Heart right ventricle (tissue), 16 donors: ENCODE measurements at regions of chr22 and their contacts with region 1.

Region 1: DNA sequence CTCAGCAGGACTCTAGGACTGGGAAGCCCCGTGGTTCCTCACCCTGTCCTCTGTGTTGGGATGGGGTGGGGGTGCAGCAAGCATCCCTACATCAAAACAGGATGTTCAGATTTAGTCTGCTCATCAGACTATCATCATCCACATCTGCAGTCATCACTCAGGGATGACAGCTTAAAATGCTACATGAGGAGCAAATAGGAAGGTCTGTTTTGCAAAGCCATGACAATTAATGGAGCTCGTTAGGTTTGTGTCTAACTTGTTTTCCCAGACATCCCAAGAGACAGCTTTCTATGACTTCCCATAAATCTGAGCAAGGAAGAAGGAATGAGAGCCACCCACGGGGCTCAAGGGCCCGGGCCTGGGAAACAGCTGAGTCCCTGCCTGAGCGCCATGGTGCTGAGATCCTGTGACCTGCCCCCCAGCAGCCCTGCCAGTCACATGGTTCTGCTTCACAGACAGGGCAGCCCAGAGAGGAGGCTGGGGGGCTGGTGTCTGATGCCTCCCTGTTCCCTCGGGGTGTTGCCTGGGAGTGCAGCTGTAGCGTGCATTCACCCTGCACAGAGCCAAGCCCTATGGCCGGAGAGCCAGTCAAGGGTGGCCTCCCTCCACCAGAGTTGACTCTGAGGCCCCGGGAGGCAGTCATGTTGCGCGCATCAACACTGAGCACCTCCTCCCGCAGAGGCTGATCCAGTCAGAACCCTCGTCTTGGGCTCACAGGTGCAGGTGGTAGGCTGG is 12.2 kb downstream of the DERL3 start:
- DNase-seq: no peak
- ATAC-seq: no peak
- H3K4me3 ChIP-seq: no peak overlapping the region
- H3K27ac ChIP-seq: peak overlapping the region in 9 of 10 donors; percentile 15 to 91 (median 70)
- H3K4me1 ChIP-seq: peaks cover 14 to 99% (median 73%) of the 10 kb centered on the region in 9 donors
- H3K27me3 ChIP-seq: no peaks in the 10 kb centered on the region
- CTCF ChIP-seq: no peak

Region 2: DNA sequence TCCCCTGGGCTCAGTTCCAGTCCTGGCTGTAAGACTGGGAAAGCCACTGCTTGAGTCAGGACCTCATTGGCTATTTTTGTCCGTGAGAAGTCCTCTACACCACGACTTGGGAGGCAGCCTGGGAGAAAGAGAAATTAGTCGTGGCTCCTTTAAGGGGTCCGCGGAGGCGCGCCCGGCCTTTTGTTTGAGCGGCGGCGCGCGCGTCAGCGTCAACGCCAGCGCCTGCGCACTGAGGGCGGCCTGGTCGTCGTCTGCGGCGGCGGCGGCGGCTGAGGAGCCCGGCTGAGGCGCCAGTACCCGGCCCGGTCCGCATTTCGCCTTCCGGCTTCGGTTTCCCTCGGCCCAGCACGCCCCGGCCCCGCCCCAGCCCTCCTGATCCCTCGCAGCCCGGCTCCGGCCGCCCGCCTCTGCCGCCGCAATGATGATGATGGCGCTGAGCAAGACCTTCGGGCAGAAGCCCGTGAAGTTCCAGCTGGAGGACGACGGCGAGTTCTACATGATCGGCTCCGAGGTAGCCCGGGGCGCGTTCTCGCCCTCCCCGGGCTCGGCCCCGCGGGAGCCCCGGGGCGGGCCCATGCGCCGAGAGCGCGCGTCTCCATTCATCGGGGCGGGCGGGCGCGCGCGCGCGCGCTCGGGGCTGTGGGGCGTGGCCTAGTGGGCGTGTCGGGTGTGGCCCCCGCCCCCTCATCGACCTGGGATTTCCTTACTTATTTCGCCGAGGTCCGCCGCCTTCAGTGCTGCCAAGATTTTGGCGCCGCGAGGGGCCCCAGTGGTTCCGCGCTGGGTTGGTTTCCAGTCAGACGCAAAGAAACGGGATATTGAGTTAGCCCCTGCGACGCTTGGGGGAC is 39.7 kb before region 1 on chr22 and contains the start of gene SMARCB1:
- intact Hi-C with region 1: loop called in 1 of 10 experiments (anchors 5 kb)
- DNase-seq: peak; percentile 92 to 93
- ATAC-seq: peak; percentile 90 to 97 (median 95)
- H3K4me3 ChIP-seq: peak within 1 kb of the TSS; percentile 70 to 96 (median 88)
- H3K27ac ChIP-seq: peak within 1 kb of the TSS; percentile 98 to 100 (median 100)
- H3K4me1 ChIP-seq: peaks cover 14 to 59% (median 46%) of the 10 kb centered on the region in 9 donors
- H3K27me3 ChIP-seq: no peaks in the 10 kb centered on the region
- CTCF ChIP-seq: peak in 1 of 9 donors; percentile 8
- total RNA-seq, gene SMARCB1: 28.5 to 73.1 (median 39.8) TPM